OCI-LY7 (cell line): ENCODE measurements at regions of chr7 and their contacts with region 1.

Region 1: GRCh38 chr7:104848138-104848990 is 165.6 kb upstream of the KMT2E start:
- DNase-seq: peak; percentile 51
- H3K4me3 ChIP-seq: no peak overlapping the region
- H3K27ac ChIP-seq: no peak overlapping the region
- H3K4me1 ChIP-seq: no peaks in the 10 kb centered on the region
- CTCF ChIP-seq: peak; percentile 95

Region 2: GRCh38 chr7:104231054-104232046 is 617.0 kb before region 1 on chr7:
- CTCF ChIA-PET with region 1: no interaction called
- POLR2A ChIA-PET with region 1: no interaction called
- intact Hi-C with region 1: loop called (anchors 1 kb)
- DNase-seq: peak; percentile 61
- H3K4me3 ChIP-seq: no peak overlapping the region
- H3K27ac ChIP-seq: no peak overlapping the region
- H3K4me1 ChIP-seq: no peaks in the 10 kb centered on the region
- CTCF ChIP-seq: peak; percentile 82

Region 3: DNA sequence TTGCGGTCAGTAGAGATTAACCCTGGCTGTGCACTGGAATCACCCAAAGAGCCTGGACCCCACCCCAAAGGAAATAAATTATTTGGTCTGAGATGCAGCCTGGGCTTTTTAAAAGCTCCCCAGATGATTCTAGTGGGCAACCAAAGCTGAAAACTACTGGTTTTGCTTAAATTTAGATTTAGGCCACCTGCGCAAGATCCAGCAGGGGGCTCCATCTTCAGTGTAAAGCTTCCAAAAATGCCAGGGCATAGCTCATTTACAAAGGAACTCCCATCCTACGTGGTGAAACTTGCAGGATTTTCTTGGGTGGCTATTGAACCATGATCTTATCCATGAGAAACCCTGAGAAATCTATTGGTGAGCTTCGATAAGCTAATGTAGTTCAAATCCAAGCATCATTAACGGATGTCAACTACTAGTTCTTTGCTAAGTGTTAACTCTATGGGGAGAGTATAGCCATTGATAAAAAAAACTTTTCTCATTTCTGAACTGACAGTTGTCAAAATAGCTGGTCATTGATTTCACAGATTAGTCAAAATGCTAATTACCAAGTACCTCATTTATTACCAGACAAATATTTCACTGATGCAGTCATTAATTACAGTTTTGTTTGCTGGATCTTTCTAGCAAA is 204.7 kb before region 1 on chr7:
- CTCF ChIA-PET with region 1: no interaction called
- POLR2A ChIA-PET with region 1: no interaction called
- intact Hi-C with region 1: loop called (anchors 2 kb)
- DNase-seq: peak; percentile 13
- H3K4me3 ChIP-seq: no peak overlapping the region
- H3K27ac ChIP-seq: no peak overlapping the region
- H3K4me1 ChIP-seq: no peaks in the 10 kb centered on the region
- CTCF ChIP-seq: peak; percentile 80